ENCODE measurements at regions of chr16 and their contacts with region 1.

Region 1: GRCh38 chr16:13957197-13958078 is 37.5 kb downstream of the ERCC4 start:
- DNase-seq: peak; percentile 56
- ATAC-seq: peak; percentile 84
- H3K4me3 ChIP-seq: peak overlapping the region; percentile 70
- H3K27ac ChIP-seq: peak overlapping the region; percentile 85
- H3K4me1 ChIP-seq: peaks cover 29% of the 10 kb centered on the region
- H3K27me3 ChIP-seq: no peaks in the 10 kb centered on the region
- CTCF ChIP-seq: no peak
- EP300 ChIP-seq: peak; percentile 28 to 31; a peak in 3 of 4 replicates
- POLR2A ChIP-seq: 0 out of 2 replicates have a peak, but pooled peaks have one; percentile 18
- RAD21 ChIP-seq: no peak

Region 2: DNA sequence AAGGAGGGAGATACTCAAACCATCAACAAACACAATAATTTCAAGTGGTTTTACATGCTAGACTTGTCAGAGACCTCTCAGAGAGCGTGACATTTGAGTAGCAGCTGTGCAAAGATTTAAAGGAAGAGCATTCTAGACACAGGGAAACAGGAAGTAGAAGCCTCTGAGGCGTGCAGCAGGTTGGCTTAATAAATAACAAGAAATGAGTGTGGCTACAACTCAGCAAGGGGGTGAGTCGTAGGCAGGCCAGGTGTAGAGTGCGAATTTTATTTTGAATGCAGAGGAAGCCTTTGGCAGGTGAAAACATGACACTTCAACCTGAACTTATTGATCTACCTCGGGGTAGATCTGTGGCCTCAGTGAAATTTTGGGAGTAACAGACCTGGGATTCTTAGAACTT is 40.5 kb after region 1 on chr16:
- CTCF ChIA-PET with region 1: no interaction called
- POLR2A ChIA-PET with region 1: interaction called, 6 read pairs
- RAD21 ChIA-PET with region 1: interaction called, 6 read pairs
- SMC1A ChIA-PET with region 1: interaction called, 8 read pairs
- in situ Hi-C with region 1: no loop called
- intact Hi-C with region 1: loop called (anchors 1 kb)
- DNase-seq: peak; percentile 76
- ATAC-seq: peak; percentile 91
- H3K4me3 ChIP-seq: no peak overlapping the region
- H3K27ac ChIP-seq: peak overlapping the region; percentile 51
- H3K4me1 ChIP-seq: peaks cover 33% of the 10 kb centered on the region
- H3K27me3 ChIP-seq: no peaks in the 10 kb centered on the region
- CTCF ChIP-seq: no peak
- EP300 ChIP-seq: peak in 1 of 2 experiments; percentile 49; a peak in 2 of 4 replicates
- POLR2A ChIP-seq: no peak
- RAD21 ChIP-seq: no peak

Region 3: DNA sequence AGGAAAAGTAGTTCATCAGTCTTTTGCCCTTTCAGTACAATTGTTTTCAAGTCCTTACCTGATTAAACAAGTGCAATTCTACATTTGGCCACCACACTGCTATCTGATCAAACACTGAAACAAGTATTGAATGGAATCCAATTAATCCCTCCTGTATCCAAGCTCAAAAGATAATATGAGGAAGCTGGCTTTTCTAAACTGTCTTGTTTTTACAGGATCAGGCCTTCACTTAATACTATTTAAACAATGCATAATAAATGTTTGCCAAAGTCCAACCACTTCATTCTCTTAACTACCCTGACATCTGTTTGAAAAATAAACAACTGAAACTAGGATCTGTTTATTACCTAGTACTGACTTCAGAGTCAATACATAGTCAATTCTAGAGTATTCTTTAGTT is 245.3 kb after region 1 on chr16:
- CTCF ChIA-PET with region 1: no interaction called
- POLR2A ChIA-PET with region 1: no interaction called
- RAD21 ChIA-PET with region 1: no interaction called
- SMC1A ChIA-PET with region 1: no interaction called
- in situ Hi-C with region 1: no loop called
- intact Hi-C with region 1: loop called (anchors 2 kb)
- DNase-seq: no peak
- ATAC-seq: peak; percentile 71
- H3K4me3 ChIP-seq: no peak overlapping the region
- H3K27ac ChIP-seq: no peak overlapping the region
- H3K4me1 ChIP-seq: peaks cover 8% of the 10 kb centered on the region
- H3K27me3 ChIP-seq: no peaks in the 10 kb centered on the region
- CTCF ChIP-seq: peak in 1 of 3 experiments; percentile 37; a peak in 2 of 6 replicates
- EP300 ChIP-seq: no peak
- POLR2A ChIP-seq: no peak
- RAD21 ChIP-seq: no peak

Region 4: DNA sequence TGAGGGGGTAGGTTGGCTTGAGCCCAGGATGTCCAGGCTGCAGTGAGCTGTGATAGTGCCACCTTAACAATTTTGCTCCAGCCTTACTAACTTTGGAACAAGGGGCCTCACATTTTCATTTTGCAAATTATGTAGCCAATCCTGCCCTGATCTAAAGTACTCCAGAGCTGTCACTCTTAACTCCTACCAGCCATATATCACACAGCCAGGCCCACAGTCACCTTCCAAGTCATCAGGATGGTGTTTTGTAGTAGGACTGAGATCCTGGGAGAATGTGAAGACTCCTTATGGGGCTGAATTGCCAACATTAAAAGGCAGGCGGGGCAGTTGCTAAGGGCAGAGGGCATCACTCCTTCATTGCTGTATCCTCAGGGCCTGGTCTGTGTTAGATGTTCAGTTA is 356.7 kb after region 1 on chr16:
- CTCF ChIA-PET with region 1: no interaction called
- POLR2A ChIA-PET with region 1: no interaction called
- RAD21 ChIA-PET with region 1: no interaction called
- SMC1A ChIA-PET with region 1: no interaction called
- in situ Hi-C with region 1: no loop called
- intact Hi-C with region 1: no loop called
- DNase-seq: no peak
- ATAC-seq: no peak
- H3K4me3 ChIP-seq: 0 out of 2 replicates have a peak overlapping the region, but pooled peaks have one; percentile 2
- H3K27ac ChIP-seq: 0 out of 2 replicates have a peak overlapping the region, but pooled peaks have one; percentile 24
- H3K4me1 ChIP-seq: peaks cover 28% of the 10 kb centered on the region
- H3K27me3 ChIP-seq: no peaks in the 10 kb centered on the region
- CTCF ChIP-seq: no peak
- EP300 ChIP-seq: no peak
- POLR2A ChIP-seq: no peak
- RAD21 ChIP-seq: no peak